H1 (cell line): ENCODE measurements at regions of chr3 and their contacts with region 1.

Region 1: GRCh38 chr3:58414538-58415197 is 19.0 kb downstream of the PDHB start:
- DNase-seq: peak in 1 of 2 experiments; percentile 61
- H3K4me3 ChIP-seq: no peak overlapping the region
- H3K27ac ChIP-seq: no peak overlapping the region
- H3K4me1 ChIP-seq: peaks cover 0 to 5% (median 4%) of the 10 kb centered on the region in 4 experiments; a peak in 2 of 7 replicates
- H3K27me3 ChIP-seq: no peaks in the 10 kb centered on the region
- CTCF ChIP-seq: peak in 2 of 3 experiments; percentile 64 to 77; a peak in 3 of 4 replicates
- EP300 ChIP-seq: no peak
- POLR2A ChIP-seq: no peak
- RAD21 ChIP-seq: peak; percentile 60 to 71

Region 2: DNA sequence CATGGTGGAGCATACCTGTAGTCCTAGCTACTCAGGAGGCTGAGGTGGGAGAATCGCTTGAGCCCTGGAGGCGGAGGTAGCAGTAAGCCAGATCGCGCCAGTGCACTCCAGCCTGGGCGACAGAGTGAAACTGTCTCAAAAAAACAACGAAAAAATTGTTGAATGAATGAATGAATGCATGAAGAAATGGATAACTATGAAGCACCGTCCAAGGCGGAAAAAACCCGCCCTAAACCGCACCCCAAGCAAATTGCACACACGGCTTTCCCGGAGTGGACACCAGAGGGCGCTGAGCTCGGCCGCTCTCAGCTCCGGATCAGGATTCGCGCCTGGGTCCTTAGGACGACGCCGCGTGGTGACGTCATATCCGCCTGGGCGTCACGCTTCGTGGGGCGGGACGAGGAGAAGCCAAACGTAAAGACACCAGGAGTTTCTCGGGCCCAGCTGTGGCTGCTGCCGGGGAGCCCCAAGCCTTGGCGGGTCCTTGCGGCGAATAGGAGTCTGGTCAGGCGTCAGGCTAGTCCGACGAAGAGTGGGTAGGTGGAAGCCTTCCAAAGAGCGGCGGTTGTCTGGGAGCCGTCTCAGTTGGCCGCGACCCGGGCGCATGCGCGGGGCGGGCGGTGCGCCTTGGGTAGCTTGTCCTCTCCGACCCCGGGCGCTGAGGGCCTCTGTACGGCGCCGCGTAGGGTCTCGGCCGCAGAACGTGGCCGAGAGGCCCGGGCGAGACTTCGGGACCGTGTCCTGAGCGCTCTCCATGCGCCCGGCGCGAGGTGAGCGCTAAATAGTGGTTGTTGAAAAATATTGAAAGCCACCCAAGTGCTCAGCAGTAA is 108.6 kb before region 1 on chr3 and contains the starts of genes HTD2 and RPP14:
- CTCF ChIA-PET with region 1: interaction called, 41 read pairs
- POLR2A ChIA-PET with region 1: interaction called, 14 read pairs
- DNase-seq: peak; percentile 90 to 99
- H3K4me3 ChIP-seq: peak within 1 kb of the TSS; percentile 82 to 95 (median 93)
- H3K27ac ChIP-seq: peak within 1 kb of the TSS; percentile 97
- H3K4me1 ChIP-seq: no peaks in the 10 kb centered on the region
- H3K27me3 ChIP-seq: no peaks in the 10 kb centered on the region; a peak in 1 of 7 replicates
- CTCF ChIP-seq: peak; percentile 86 to 98 (median 92)
- EP300 ChIP-seq: peak in 1 of 2 experiments; percentile 63; a peak in 1 of 3 replicates
- POLR2A ChIP-seq: peak; percentile 75 to 96
- RAD21 ChIP-seq: peak; percentile 28 to 47; a peak in 3 of 4 replicates
- total RNA-seq, gene HTD2: 10.3 and 10.8 TPM in 2 replicates
- total RNA-seq, gene RPP14: 19.8 and 23.4 TPM in 2 replicates

Region 3: GRCh38 chr3:58324391-58325390 is 90.0 kb before region 1 on chr3:
- CTCF ChIA-PET with region 1: interaction called, 10 read pairs
- POLR2A ChIA-PET with region 1: interaction called, 8 read pairs
- DNase-seq: no peak
- H3K4me3 ChIP-seq: no peak overlapping the region
- H3K27ac ChIP-seq: no peak overlapping the region
- H3K4me1 ChIP-seq: peaks cover 0 to 9% (median 9%) of the 10 kb centered on the region in 4 experiments; a peak in 5 of 7 replicates
- H3K27me3 ChIP-seq: no peaks in the 10 kb centered on the region
- CTCF ChIP-seq: no peak
- EP300 ChIP-seq: no peak
- POLR2A ChIP-seq: no peak
- RAD21 ChIP-seq: no peak

Region 4: GRCh38 chr3:58377750-58378149 is 36.9 kb before region 1 on chr3:
- CTCF ChIA-PET with region 1: interaction called, 20 read pairs
- POLR2A ChIA-PET with region 1: no interaction called
- DNase-seq: no peak
- H3K4me3 ChIP-seq: no peak overlapping the region
- H3K27ac ChIP-seq: no peak overlapping the region
- H3K4me1 ChIP-seq: no peaks in the 10 kb centered on the region
- H3K27me3 ChIP-seq: no peaks in the 10 kb centered on the region
- CTCF ChIP-seq: peak in 1 of 3 experiments; percentile 24; a peak in 1 of 4 replicates
- EP300 ChIP-seq: no peak
- POLR2A ChIP-seq: no peak
- RAD21 ChIP-seq: peak; percentile 26 to 53; a peak in 3 of 4 replicates

Region 5: GRCh38 chr3:58392181-58392580 is 22.5 kb before region 1 on chr3:
- CTCF ChIA-PET with region 1: interaction called, 17 read pairs
- POLR2A ChIA-PET with region 1: no interaction called
- DNase-seq: no peak
- H3K4me3 ChIP-seq: no peak overlapping the region
- H3K27ac ChIP-seq: no peak overlapping the region
- H3K4me1 ChIP-seq: peaks cover 2 to 13% (median 10%) of the 10 kb centered on the region in 4 experiments; a peak in 5 of 7 replicates
- H3K27me3 ChIP-seq: no peaks in the 10 kb centered on the region
- CTCF ChIP-seq: no peak
- EP300 ChIP-seq: no peak
- POLR2A ChIP-seq: no peak
- RAD21 ChIP-seq: no peak

Region 6: DNA sequence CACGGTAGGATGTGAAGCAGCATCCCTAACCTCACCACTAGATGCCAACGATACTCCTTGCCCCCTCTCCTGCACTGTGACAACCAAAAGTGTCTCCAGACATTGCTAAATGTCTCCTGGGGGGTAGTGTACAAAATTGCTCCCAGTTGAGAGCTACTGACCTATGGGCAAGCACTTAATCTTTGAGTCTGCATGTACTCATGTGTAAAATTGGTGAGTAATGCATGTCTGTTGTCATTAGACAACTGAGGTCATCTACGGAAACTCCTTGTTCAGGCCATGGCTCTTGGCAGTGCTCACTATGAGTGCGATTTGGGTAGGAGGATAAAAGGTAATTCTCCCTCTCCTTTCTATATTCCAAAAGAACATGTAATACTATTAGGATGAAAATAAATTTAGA is 10.3 kb before region 1 on chr3:
- CTCF ChIA-PET with region 1: interaction called, 33 read pairs
- POLR2A ChIA-PET with region 1: interaction called, 5 read pairs
- DNase-seq: no peak
- H3K4me3 ChIP-seq: no peak overlapping the region
- H3K27ac ChIP-seq: no peak overlapping the region
- H3K4me1 ChIP-seq: peaks cover 0 to 6% (median 2%) of the 10 kb centered on the region in 4 experiments; a peak in 3 of 7 replicates
- H3K27me3 ChIP-seq: no peaks in the 10 kb centered on the region
- CTCF ChIP-seq: no peak
- EP300 ChIP-seq: no peak
- POLR2A ChIP-seq: no peak
- RAD21 ChIP-seq: peak in 1 of 2 experiments; percentile 16; a peak in 1 of 4 replicates

Region 7: DNA sequence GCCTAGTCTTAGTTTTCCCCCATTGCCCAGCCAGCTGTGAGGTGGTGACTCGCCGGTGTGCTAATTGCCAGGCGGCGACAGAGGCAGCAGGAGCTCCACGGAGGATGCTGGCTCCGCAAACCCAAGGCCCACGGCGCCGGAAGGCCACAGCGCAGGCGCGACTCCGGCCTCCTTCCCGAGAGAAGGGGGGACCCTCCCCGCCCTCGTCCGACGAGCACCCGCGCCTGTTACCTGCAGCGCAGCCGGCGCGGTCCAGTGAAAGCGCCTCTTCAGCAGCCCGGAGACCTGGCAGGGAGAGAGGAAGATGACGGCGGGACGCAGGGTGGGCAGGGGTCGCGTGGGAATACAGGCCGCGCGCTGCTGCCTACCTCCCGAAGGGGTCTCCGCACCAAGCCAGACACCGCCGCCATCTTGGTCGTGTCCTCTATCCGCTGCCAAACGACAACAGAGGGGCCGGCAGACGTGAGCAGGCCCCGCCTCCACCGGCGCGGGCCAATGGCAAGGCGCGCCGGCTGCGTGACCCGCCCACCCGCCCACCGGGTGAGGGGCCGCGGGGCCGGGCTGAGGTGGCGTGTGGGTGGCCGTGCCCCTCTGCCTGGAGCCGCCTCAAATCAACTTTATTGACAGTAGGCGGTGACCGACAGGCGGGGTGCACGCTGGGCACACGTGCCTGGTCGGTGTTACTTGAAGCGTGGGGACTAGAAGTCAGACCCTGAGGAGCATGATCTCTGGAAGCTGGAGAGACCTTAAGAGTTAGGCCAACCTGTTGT is 18.9 kb after region 1 on chr3 and contains the start of gene PDHB:
- CTCF ChIA-PET with region 1: interaction called, 10 read pairs
- POLR2A ChIA-PET with region 1: interaction called, 11 read pairs
- DNase-seq: peak; percentile 71 to 87
- H3K4me3 ChIP-seq: peak within 1 kb of the TSS; percentile 65 to 96 (median 89)
- H3K27ac ChIP-seq: peak within 1 kb of the TSS; percentile 94
- H3K4me1 ChIP-seq: peaks cover 0 to 21% (median 12%) of the 10 kb centered on the region in 4 experiments; a peak in 5 of 7 replicates
- H3K27me3 ChIP-seq: no peaks in the 10 kb centered on the region
- CTCF ChIP-seq: no peak
- EP300 ChIP-seq: peak in 1 of 2 experiments; percentile 39; a peak in 1 of 3 replicates
- POLR2A ChIP-seq: peak; percentile 76 to 85
- RAD21 ChIP-seq: no peak
- total RNA-seq, gene PDHB: 132 and 140 TPM in 2 replicates

Region 8: GRCh38 chr3:58578873-58579272 is 164.2 kb after region 1 on chr3:
- CTCF ChIA-PET with region 1: no interaction called
- POLR2A ChIA-PET with region 1: no interaction called
- DNase-seq: no peak
- H3K4me3 ChIP-seq: no peak overlapping the region
- H3K27ac ChIP-seq: no peak overlapping the region
- H3K4me1 ChIP-seq: peaks cover 1 to 8% (median 7%) of the 10 kb centered on the region in 4 experiments; a peak in 5 of 7 replicates
- H3K27me3 ChIP-seq: peaks cover 0 to 2% (median 1%) of the 10 kb centered on the region in 4 experiments; a peak in 3 of 7 replicates
- CTCF ChIP-seq: no peak
- EP300 ChIP-seq: no peak
- POLR2A ChIP-seq: no peak
- RAD21 ChIP-seq: no peak